ENCODE measurements at regions of chr13 and their contacts with region 1.

Region 1: GRCh38 chr13:29354377-29354776 is 241.1 kb downstream of the SLC7A1 start:
- DNase-seq: no peak
- ATAC-seq: no peak
- H3K4me3 ChIP-seq: no peak overlapping the region
- H3K4me3 Mint-ChIP-seq: no peak overlapping the region
- H3K27ac ChIP-seq: no peak overlapping the region
- H3K27ac Mint-ChIP-seq: no peak overlapping the region
- H3K4me1 ChIP-seq: no peaks in the 10 kb centered on the region
- H3K4me1 Mint-ChIP-seq: no peaks in the 10 kb centered on the region
- H3K27me3 ChIP-seq: no peaks in the 10 kb centered on the region
- H3K27me3 Mint-ChIP-seq: peaks cover 63% of the 10 kb centered on the region
- CTCF ChIP-seq: no peak

Region 2: GRCh38 chr13:29210676-29211075 is 143.7 kb before region 1 on chr13:
- CTCF ChIA-PET with region 1: no interaction called
- POLR2A ChIA-PET with region 1: no interaction called
- intact Hi-C with region 1: loop called in 1 of 2 experiments (anchors 5 kb)
- DNase-seq: no peak
- ATAC-seq: no peak
- H3K4me3 ChIP-seq: no peak overlapping the region
- H3K4me3 Mint-ChIP-seq: no peak overlapping the region
- H3K27ac ChIP-seq: no peak overlapping the region
- H3K27ac Mint-ChIP-seq: no peak overlapping the region
- H3K4me1 ChIP-seq: no peaks in the 10 kb centered on the region
- H3K4me1 Mint-ChIP-seq: no peaks in the 10 kb centered on the region
- H3K27me3 ChIP-seq: no peaks in the 10 kb centered on the region
- H3K27me3 Mint-ChIP-seq: no peaks in the 10 kb centered on the region
- CTCF ChIP-seq: no peak